ENCODE measurements at regions of chr22 and their contacts with region 1.

Region 1: GRCh38 chr22:41746567-41747400 is 47.5 kb downstream of the MEI1 start:
- DNase-seq: peak; percentile 69
- ATAC-seq: peak; percentile 100
- H3K4me3 ChIP-seq: no peak overlapping the region
- H3K27ac ChIP-seq: no peak overlapping the region
- H3K4me1 ChIP-seq: peaks cover 0 to 5% of the 10 kb centered on the region in 2 experiments; a peak in 2 of 4 replicates
- H3K27me3 ChIP-seq: no peaks in the 10 kb centered on the region; the same call in 1 of the 2 replicates
- CTCF ChIP-seq: peak; percentile 69 to 85 (median 81); a peak in 5 of 6 replicates
- POLR2A ChIP-seq: no peak
- RAD21 ChIP-seq: peak; percentile 82

Region 2: GRCh38 chr22:41762980-41763779 is 16.4 kb after region 1 on chr22:
- CTCF ChIA-PET with region 1: interaction called, 13 read pairs
- POLR2A ChIA-PET with region 1: no interaction called
- RAD21 ChIA-PET with region 1: no interaction called
- intact Hi-C with region 1: no loop called
- DNase-seq: peak; percentile 28
- ATAC-seq: peak; percentile 89
- H3K4me3 ChIP-seq: no peak overlapping the region
- H3K27ac ChIP-seq: no peak overlapping the region
- H3K4me1 ChIP-seq: peaks cover 0 to under 1% of the 10 kb centered on the region in 2 experiments; a peak in 1 of 4 replicates
- H3K27me3 ChIP-seq: no peaks in the 10 kb centered on the region
- CTCF ChIP-seq: peak; percentile 29 to 80 (median 78); a peak in 5 of 6 replicates
- POLR2A ChIP-seq: no peak
- RAD21 ChIP-seq: peak; percentile 36; the same call in 1 of the 2 replicates

Region 3: GRCh38 chr22:42001121-42001520 is 254.3 kb after region 1 on chr22:
- CTCF ChIA-PET with region 1: no interaction called
- POLR2A ChIA-PET with region 1: no interaction called
- RAD21 ChIA-PET with region 1: no interaction called
- intact Hi-C with region 1: no loop called
- DNase-seq: no peak
- ATAC-seq: no peak
- H3K4me3 ChIP-seq: no peak overlapping the region
- H3K27ac ChIP-seq: no peak overlapping the region
- H3K4me1 ChIP-seq: no peaks in the 10 kb centered on the region
- H3K27me3 ChIP-seq: no peaks in the 10 kb centered on the region
- CTCF ChIP-seq: no peak
- POLR2A ChIP-seq: no peak
- RAD21 ChIP-seq: no peak

Region 4: DNA sequence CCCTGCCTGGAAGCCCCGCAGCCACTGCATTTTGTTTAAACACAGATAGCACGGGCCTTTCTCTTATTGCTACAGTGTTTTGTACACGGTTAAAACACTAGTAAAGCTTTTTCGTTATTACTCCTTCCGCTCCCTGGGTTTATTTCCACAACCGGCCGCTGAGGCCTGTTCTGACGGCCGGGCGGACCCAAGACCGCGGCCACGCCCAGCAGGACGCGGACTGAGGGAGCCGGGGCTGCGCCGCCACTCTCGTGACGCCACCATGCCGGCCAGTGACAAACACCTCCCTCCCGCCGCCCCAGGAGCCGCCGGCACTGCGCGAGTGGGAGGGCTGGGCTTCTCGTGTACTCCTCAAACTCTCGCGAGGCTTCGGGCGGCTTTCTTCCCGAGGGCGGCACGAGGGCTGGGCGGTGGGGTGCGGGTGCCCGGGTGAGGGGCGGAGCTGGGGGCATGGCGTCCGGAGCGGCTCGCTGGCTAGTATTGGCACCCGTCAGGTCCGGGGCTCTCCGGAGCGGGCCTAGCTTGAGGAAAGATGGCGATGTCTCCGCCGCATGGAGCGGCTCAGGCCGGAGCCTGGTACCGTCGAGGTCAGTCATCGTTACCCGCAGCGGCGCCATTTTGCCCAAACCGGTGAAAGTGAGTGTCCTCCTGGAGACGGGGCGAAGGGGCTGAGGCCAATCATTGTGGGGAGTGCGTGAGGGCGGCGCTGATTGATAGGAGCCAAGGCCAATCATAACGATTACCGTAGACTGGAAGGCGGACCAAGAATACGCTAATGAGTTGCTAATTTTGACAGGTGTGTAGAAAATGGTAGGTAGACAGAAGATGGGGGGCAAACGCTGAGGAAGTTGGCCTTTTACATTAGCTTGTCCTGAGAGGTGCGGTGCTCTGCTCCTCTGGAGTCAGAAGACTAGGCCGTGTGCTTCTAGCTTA is 332.8 kb after region 1 on chr22 and contains the start of gene SMDT1:
- CTCF ChIA-PET with region 1: no interaction called
- POLR2A ChIA-PET with region 1: no interaction called
- RAD21 ChIA-PET with region 1: no interaction called
- intact Hi-C with region 1: no loop called
- DNase-seq: peak; percentile 97
- ATAC-seq: peak; percentile 93
- H3K4me3 ChIP-seq: peak within 1 kb of the TSS; percentile 68 to 69
- H3K27ac ChIP-seq: peak within 1 kb of the TSS; percentile 73
- H3K4me1 ChIP-seq: peaks cover 12 to 19% of the 10 kb centered on the region in 2 experiments
- H3K27me3 ChIP-seq: no peaks in the 10 kb centered on the region
- CTCF ChIP-seq: no peak
- POLR2A ChIP-seq: peak; percentile 67
- RAD21 ChIP-seq: no peak
- total RNA-seq, gene SMDT1: 51.9 TPM

Measured in HCT116 (cell line).